Dendritic cell treated with granulocyte-macrophage colony-stimulating factor and Interleukin-4, amounts not matched to agents 40 ng/mL and 50 ng/mL, for 4 days (primary cell): ENCODE measurements at regions of chr9 and their contacts with region 1.

Region 1: DNA sequence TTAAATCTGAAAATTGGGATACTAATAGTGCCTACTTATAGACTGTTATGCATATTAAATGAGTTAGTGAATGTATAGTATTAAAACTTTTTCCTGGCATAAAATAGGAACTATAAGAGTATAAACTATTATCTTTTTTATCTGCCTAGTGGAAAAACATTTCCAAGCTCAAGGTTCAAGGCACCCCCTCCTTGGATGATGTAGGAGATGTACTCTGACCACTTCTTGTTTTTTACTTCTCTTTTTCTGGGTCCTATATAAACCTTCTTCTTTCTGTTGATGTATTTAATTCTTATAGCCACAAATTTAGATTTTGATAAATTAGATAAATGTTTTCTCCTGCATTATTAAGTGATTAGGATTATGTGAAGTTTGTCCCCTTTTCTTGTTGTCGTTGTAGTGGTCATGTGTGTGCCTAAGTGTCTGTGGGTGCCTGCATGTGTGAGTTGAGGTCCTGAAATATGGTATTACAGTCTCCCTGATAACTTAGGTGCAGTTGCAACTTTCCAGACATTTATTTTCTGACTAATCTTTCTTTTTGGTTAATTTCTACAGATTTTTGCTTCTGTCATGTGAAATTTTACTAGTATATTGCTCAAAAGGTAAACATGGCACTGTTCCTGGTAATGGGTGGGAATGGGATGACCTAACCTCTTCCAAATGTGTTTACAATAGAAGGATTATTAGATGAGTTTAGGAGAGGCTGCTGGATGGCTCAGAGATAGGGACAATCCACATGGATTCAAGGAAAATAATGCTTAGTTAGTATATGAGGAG is 160.8 kb upstream of the CDKN2B start:
- H3K4me3 Mint-ChIP-seq: no peak overlapping the region
- H3K27ac Mint-ChIP-seq: peak overlapping the region; percentile 35
- H3K4me1 Mint-ChIP-seq: peaks cover 34% of the 10 kb centered on the region
- H3K27me3 Mint-ChIP-seq: peaks cover 11% of the 10 kb centered on the region

Region 2: GRCh38 chr9:21993893-21994555 is 175.9 kb before region 1 on chr9 and contains the start of gene CDKN2A:
- intact Hi-C with region 1: no loop called
- H3K4me3 Mint-ChIP-seq: peak within 1 kb of the TSS; percentile 94
- H3K27ac Mint-ChIP-seq: peak within 1 kb of the TSS; percentile 97
- H3K4me1 Mint-ChIP-seq: peaks cover 30% of the 10 kb centered on the region
- H3K27me3 Mint-ChIP-seq: peaks cover 59% of the 10 kb centered on the region

Region 3: DNA sequence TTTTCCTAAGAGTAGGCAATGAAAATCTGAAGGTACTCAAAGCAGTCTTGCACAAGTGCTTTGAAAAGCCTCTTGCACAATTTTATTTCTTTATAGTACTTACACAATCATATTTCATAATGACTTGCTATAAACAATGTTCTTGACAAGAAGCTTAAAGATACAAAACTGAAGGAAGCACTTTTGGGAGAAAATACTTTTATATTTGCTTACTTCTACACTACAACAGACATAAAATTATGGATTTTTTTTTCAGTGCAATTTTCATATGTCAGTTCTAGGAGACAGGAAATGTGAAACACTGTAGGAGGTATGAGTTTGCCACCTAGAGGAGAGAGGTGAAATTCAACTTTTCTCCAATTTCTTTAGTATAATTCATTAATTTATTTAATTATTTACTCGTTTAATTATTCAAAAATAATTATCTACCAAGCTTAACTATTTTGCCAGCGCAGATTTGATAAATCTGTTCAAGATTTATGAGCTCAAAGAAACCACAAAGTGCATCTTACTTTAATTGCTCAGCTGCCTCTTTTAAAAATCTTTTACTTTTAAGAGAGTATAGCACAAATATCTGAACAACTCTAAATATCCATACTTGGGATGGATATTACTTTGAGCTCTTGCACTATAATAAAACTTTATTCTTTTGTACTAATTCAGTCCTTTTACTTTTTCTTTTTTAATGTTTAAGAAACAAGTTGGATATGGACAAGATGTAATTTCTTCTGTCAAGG is 131.8 kb before region 1 on chr9:
- intact Hi-C with region 1: loop called (anchors 10 kb)
- H3K4me3 Mint-ChIP-seq: no peak overlapping the region
- H3K27ac Mint-ChIP-seq: no peak overlapping the region
- H3K4me1 Mint-ChIP-seq: peaks cover 6% of the 10 kb centered on the region
- H3K27me3 Mint-ChIP-seq: peaks cover 6% of the 10 kb centered on the region

Region 4: DNA sequence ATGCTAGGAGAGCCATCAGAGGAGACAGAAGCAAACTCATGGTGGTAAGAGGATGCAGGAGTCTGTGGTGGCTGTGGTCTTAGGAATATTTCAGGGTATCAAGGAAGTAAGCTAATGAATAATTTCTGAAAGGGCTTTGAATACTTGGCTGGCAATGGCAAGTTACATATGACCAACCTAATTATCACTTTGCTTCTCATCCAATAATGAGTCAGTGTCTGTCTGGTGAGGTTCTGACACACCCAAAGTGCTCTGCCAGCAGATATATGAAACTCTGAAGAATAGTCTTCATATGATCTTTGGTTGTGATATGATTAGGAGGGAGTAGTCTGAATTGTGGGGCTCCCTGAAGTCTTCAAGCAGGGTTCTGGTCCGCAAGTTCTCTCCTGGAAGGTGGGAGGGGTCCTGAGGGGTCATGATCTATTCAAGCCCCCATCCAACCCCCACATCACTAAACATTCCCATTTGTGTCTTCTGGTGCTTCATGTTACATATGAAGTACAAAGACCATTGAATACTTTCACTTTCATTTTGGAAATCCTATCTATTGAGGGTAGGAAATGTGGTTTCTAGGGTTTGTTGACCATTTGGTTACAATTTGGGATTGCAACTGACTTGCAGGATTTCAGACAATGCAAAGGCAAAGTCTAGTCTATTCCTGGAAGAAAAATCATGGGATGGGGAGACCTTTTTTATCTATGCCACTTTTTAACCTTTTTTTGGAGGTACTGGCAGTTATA is 39.1 kb after region 1 on chr9:
- intact Hi-C with region 1: loop called (anchors 5 kb)
- H3K4me3 Mint-ChIP-seq: no peak overlapping the region
- H3K27ac Mint-ChIP-seq: no peak overlapping the region
- H3K4me1 Mint-ChIP-seq: peaks cover 22% of the 10 kb centered on the region
- H3K27me3 Mint-ChIP-seq: peaks cover 6% of the 10 kb centered on the region